CD8-positive, alpha-beta memory T cell (primary cell): ENCODE measurements at regions of chr17 and their contacts with region 1.

Region 1: GRCh38 chr17:35063514-35064223 is at the start of gene RFFL:
- DNase-seq: peak; percentile 75 to 93 (median 80)
- H3K4me3 ChIP-seq: peak within 1 kb of the TSS; percentile 38
- H3K4me3 Mint-ChIP-seq: peak within 1 kb of the TSS; percentile 72 to 92 (median 80)
- H3K27ac ChIP-seq: peak within 1 kb of the TSS; percentile 57
- H3K27ac Mint-ChIP-seq: peak within 1 kb of the TSS; percentile 88 to 97 (median 94)
- H3K4me1 ChIP-seq: peaks cover 41% of the 10 kb centered on the region
- H3K4me1 Mint-ChIP-seq: peaks cover 46 to 77% (median 73%) of the 10 kb centered on the region in 3 donors
- H3K27me3 ChIP-seq: no peaks in the 10 kb centered on the region
- H3K27me3 Mint-ChIP-seq: no peaks in the 10 kb centered on the region
- total RNA-seq, gene RFFL: 30.2 to 33.1 TPM

Region 2: GRCh38 chr17:34998205-34998604 is 65.5 kb before region 1 on chr17:
- CTCF ChIA-PET with region 1: interaction called, 51 read pairs
- POLR2A ChIA-PET with region 1: no interaction called
- DNase-seq: peak; percentile 62 to 83 (median 68)
- H3K4me3 ChIP-seq: no peak overlapping the region
- H3K4me3 Mint-ChIP-seq: no peak overlapping the region
- H3K27ac ChIP-seq: no peak overlapping the region
- H3K27ac Mint-ChIP-seq: peak overlapping the region; percentile 10 to 82 (median 70)
- H3K4me1 ChIP-seq: no peaks in the 10 kb centered on the region
- H3K4me1 Mint-ChIP-seq: peaks cover 5 to 10% (median 8%) of the 10 kb centered on the region in 3 donors
- H3K27me3 ChIP-seq: no peaks in the 10 kb centered on the region
- H3K27me3 Mint-ChIP-seq: no peaks in the 10 kb centered on the region

Region 3: GRCh38 chr17:35046740-35047283 is 16.9 kb before region 1 on chr17:
- CTCF ChIA-PET with region 1: interaction called, 17 read pairs
- POLR2A ChIA-PET with region 1: interaction called, 10 read pairs
- DNase-seq: peak; percentile 17 to 77 (median 67)
- H3K4me3 ChIP-seq: peak overlapping the region; percentile 57
- H3K4me3 Mint-ChIP-seq: peak overlapping the region; percentile 64 to 92 (median 84)
- H3K27ac ChIP-seq: peak overlapping the region; percentile 60
- H3K27ac Mint-ChIP-seq: peak overlapping the region; percentile 92 to 99 (median 94)
- H3K4me1 ChIP-seq: peaks cover 87% of the 10 kb centered on the region
- H3K4me1 Mint-ChIP-seq: peaks cover 63 to 87% (median 76%) of the 10 kb centered on the region in 3 donors
- H3K27me3 ChIP-seq: no peaks in the 10 kb centered on the region
- H3K27me3 Mint-ChIP-seq: no peaks in the 10 kb centered on the region

Region 4: GRCh38 chr17:35073991-35074627 is 10.4 kb after region 1 on chr17:
- CTCF ChIA-PET with region 1: interaction called, 25 read pairs
- POLR2A ChIA-PET with region 1: interaction called, 7 read pairs
- DNase-seq: no peak
- H3K4me3 ChIP-seq: no peak overlapping the region
- H3K4me3 Mint-ChIP-seq: peak overlapping the region; percentile 2 to 60 (median 45)
- H3K27ac ChIP-seq: no peak overlapping the region
- H3K27ac Mint-ChIP-seq: peak overlapping the region; percentile 4 to 89 (median 78)
- H3K4me1 ChIP-seq: peaks cover 57% of the 10 kb centered on the region
- H3K4me1 Mint-ChIP-seq: peaks cover 58 to 83% (median 78%) of the 10 kb centered on the region in 3 donors
- H3K27me3 ChIP-seq: no peaks in the 10 kb centered on the region
- H3K27me3 Mint-ChIP-seq: no peaks in the 10 kb centered on the region

Region 5: GRCh38 chr17:35088881-35089585 is 25.4 kb after region 1 on chr17:
- CTCF ChIA-PET with region 1: interaction called, 14 read pairs
- POLR2A ChIA-PET with region 1: interaction called, 5 read pairs
- DNase-seq: peak; percentile 86 to 92 (median 88)
- H3K4me3 ChIP-seq: peak overlapping the region; percentile 96
- H3K4me3 Mint-ChIP-seq: peak overlapping the region; percentile 95 to 98 (median 97)
- H3K27ac ChIP-seq: peak overlapping the region; percentile 90
- H3K27ac Mint-ChIP-seq: peak overlapping the region; percentile 94 to 99 (median 98)
- H3K4me1 ChIP-seq: peaks cover 29% of the 10 kb centered on the region
- H3K4me1 Mint-ChIP-seq: peaks cover 43 to 52% (median 47%) of the 10 kb centered on the region in 3 donors
- H3K27me3 ChIP-seq: no peaks in the 10 kb centered on the region
- H3K27me3 Mint-ChIP-seq: no peaks in the 10 kb centered on the region

Region 6: DNA sequence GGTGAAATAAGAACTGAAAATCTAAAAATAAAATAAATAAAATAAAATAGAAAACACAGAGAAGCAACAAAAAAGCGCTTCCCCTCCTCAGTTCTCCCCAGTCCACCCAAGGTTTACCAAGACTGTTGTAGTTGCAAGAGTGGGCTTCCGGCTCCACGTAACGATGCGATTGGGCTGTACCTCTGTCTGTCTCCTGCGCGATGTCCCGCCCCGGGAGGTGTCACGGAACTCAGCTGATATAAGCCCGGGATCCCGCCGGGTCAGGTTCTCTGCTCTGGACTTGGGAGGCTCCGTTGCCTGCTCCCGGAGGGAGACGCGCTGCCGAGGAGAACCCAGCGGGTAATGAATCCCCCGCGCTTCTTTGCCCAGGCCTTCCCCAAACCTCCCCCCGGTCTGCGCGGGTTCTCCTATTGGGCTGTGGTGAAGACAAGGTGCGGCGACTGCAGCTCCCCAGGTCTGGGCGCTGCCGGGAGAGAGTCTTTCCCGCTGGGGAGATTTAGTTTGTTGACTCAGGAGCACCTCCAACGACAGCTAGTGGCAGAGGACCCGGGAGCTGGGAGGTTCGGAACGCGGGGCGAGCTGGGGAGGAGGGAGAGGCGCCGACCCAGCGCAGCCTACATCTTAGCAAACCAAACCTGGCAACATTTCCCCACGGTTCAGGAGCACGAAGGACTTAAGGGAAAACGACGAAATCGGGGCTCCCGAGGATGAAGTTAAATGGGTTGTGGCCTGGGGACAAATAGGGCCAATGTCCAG is 179.3 kb after region 1 on chr17 and contains the start of gene SLFN5:
- CTCF ChIA-PET with region 1: no interaction called
- POLR2A ChIA-PET with region 1: no interaction called
- DNase-seq: peak; percentile 88 to 96 (median 92)
- H3K4me3 ChIP-seq: peak within 1 kb of the TSS; percentile 99
- H3K4me3 Mint-ChIP-seq: peak within 1 kb of the TSS; percentile 97 to 100 (median 99)
- H3K27ac ChIP-seq: peak within 1 kb of the TSS; percentile 96
- H3K27ac Mint-ChIP-seq: peak within 1 kb of the TSS; percentile 98 to 100 (median 99)
- H3K4me1 ChIP-seq: peaks cover 33% of the 10 kb centered on the region
- H3K4me1 Mint-ChIP-seq: peaks cover 64 to 70% (median 68%) of the 10 kb centered on the region in 3 donors
- H3K27me3 ChIP-seq: no peaks in the 10 kb centered on the region
- H3K27me3 Mint-ChIP-seq: peaks cover 0 to 8% of the 10 kb centered on the region in 2 donors
- total RNA-seq, gene SLFN5: 28.6 to 30.2 TPM

Region 7: GRCh38 chr17:35438433-35438832 is 374.8 kb after region 1 on chr17:
- CTCF ChIA-PET with region 1: no interaction called
- POLR2A ChIA-PET with region 1: no interaction called
- DNase-seq: no peak
- H3K4me3 ChIP-seq: no peak overlapping the region
- H3K4me3 Mint-ChIP-seq: no peak overlapping the region
- H3K27ac ChIP-seq: no peak overlapping the region
- H3K27ac Mint-ChIP-seq: peak overlapping the region in 1 of 8 donors; percentile 47
- H3K4me1 ChIP-seq: peaks cover 3% of the 10 kb centered on the region
- H3K4me1 Mint-ChIP-seq: peaks cover 4 to 6% (median 5%) of the 10 kb centered on the region in 3 donors
- H3K27me3 ChIP-seq: no peaks in the 10 kb centered on the region
- H3K27me3 Mint-ChIP-seq: peaks cover 0 to 2% of the 10 kb centered on the region in 2 donors